ENCODE measurements at regions of chrX and their contacts with region 1.

Region 1: DNA sequence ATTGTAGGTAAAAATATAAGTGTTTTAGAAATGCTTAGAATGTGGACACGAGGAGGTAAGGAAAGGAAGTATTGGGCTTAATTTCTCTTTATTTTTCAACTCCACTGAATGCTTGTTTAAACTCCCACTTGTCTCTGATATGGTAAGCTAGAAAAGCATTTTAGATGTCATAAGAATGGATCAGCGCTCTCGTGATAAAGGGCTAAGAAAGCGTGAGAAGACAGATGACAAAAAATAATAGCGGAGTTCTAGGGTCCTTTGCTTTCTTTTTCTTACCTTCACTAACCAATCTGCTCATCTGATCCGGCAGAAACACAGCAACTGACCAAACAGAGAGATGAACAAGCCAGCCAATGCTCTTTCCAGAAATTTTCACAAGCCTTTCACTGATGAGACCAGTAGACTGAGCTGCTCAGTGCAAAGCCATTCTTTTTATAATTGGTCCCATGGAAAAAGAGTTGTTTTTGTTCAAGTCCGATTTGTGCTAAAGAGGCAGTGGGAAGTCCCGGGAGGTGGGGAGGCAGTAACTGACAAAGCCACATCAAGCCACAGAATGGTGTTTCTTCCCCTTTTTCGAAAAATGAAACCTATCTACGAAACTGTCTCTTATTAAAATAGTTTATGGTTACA is at the start of gene TASL:
- DNase-seq: peak; percentile 39
- H3K4me3 Mint-ChIP-seq: peak within 1 kb of the TSS; percentile 96
- H3K27ac Mint-ChIP-seq: peak within 1 kb of the TSS; percentile 98
- H3K4me1 Mint-ChIP-seq: peaks cover 27% of the 10 kb centered on the region
- H3K27me3 Mint-ChIP-seq: no peaks in the 10 kb centered on the region
- total RNA-seq, gene TASL: 7.0 and 7.6 TPM in 2 replicates

Region 2: GRCh38 chrX:30593435-30594200 is 16.1 kb after region 1 on chrX:
- intact Hi-C with region 1: loop called (anchors 2 kb)
- DNase-seq: no peak
- H3K4me3 Mint-ChIP-seq: no peak overlapping the region
- H3K27ac Mint-ChIP-seq: no peak overlapping the region
- H3K4me1 Mint-ChIP-seq: peaks cover 21% of the 10 kb centered on the region
- H3K27me3 Mint-ChIP-seq: no peaks in the 10 kb centered on the region

Region 3: GRCh38 chrX:30652527-30653414 is 75.3 kb after region 1 on chrX:
- intact Hi-C with region 1: loop called (anchors 1 kb)
- DNase-seq: peak; percentile 89
- H3K4me3 Mint-ChIP-seq: peak overlapping the region; percentile 95
- H3K27ac Mint-ChIP-seq: peak overlapping the region; percentile 97
- H3K4me1 Mint-ChIP-seq: peaks cover 49% of the 10 kb centered on the region
- H3K27me3 Mint-ChIP-seq: no peaks in the 10 kb centered on the region

Region 4: GRCh38 chrX:30831082-30831481 is 253.6 kb after region 1 on chrX:
- intact Hi-C with region 1: loop called (anchors 2 kb)
- DNase-seq: peak; percentile 37
- H3K4me3 Mint-ChIP-seq: peak overlapping the region; percentile 60
- H3K27ac Mint-ChIP-seq: peak overlapping the region; percentile 67
- H3K4me1 Mint-ChIP-seq: peaks cover 26% of the 10 kb centered on the region
- H3K27me3 Mint-ChIP-seq: peaks cover 1% of the 10 kb centered on the region

Region 5: GRCh38 chrX:31333181-31333831 is 755.8 kb after region 1 on chrX:
- intact Hi-C with region 1: no loop called
- DNase-seq: no peak
- H3K4me3 Mint-ChIP-seq: no peak overlapping the region
- H3K27ac Mint-ChIP-seq: no peak overlapping the region
- H3K4me1 Mint-ChIP-seq: no peaks in the 10 kb centered on the region
- H3K27me3 Mint-ChIP-seq: peaks cover 5% of the 10 kb centered on the region

Measured in activated T-helper 1 cell treated with anti-CD3 and anti-CD28 coated beads, Interleukin-12 subunit alpha, Interleukin-12 subunit beta, Interleukin-2, Interleukin-4 antibody, amounts not matched to agents 30 ng/mL and 10 ng/mL and 1 ng/mL, durations not matched to agents 14 hours and 24 hours and 36 hours (primary cell).